Activated CD4-positive, alpha-beta T cell treated with anti-CD3 and anti-CD28 coated beads for 36 hours (primary cell): ENCODE measurements at regions of chrX and their contacts with region 1.

Region 1: DNA sequence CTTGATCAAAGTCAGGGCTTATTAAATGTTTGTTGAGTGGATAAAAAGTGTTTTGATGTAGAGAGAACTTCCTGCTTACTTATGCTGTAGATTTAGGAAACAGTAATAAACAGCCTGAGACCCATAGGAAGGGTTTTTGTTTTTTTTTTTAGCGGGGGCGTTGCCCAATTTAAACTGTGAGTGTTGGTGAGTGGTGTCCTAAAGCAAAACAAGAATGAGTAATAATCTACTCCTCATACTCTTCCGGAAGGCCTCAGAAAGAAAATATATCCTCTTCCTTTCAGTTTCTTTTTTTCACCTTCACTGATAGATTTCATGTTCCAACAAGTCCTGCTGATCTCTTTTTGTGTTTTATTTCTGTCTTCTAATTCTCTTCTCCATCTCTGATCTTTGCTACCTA is 104.4 kb upstream of the SCML1 start:
- DNase-seq: no peak
- ATAC-seq: peak; percentile 44
- H3K4me3 Mint-ChIP-seq: no peak overlapping the region
- H3K27ac Mint-ChIP-seq: peak overlapping the region; percentile 76
- H3K4me1 Mint-ChIP-seq: peaks cover 6% of the 10 kb centered on the region
- H3K27me3 Mint-ChIP-seq: no peaks in the 10 kb centered on the region

Region 2: DNA sequence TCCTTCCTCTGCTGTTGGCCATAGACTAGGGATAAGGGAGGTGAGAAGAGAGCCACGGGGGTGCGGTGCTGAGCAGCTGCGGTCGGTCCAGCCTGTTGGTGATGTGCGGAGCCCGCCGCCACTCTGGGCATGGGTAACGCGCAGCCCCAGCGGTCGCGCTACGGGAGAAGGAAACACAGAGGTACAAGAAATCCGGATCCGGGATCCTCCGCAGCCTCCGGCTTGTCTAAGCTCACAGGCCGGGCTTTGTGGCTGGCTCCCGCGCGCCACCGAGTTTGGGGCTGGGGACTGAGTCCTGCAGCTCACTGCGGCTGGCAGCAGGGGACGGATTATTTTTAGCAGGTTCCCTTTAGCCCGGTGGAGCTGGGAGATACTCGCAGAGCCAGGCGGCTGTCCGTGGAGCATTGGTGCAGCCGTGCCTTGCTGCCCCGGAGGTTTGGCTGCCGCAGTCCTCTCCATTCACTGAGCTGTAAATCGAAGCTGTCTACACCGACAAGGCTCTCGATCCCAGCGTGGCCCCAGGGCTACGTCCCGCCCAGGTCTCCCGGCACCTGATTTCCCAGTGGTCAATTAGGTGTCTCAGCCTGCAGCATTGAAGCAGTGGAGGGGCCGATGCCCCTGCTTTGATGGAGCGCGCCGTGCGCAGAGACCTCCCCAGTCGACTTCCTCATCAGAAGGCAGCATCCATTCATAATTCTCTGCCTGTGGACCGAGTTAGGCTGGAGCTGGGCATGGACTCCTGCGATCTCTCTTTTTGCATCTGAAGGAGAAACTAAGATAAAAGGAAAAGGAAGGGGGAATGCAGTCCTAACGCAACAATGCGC is 22.5 kb after region 1 on chrX:
- CTCF ChIA-PET with region 1: no interaction called
- POLR2A ChIA-PET with region 1: no interaction called
- intact Hi-C with region 1: loop called in 1 of 2 experiments (anchors 2 kb)
- DNase-seq: peak; percentile 37
- ATAC-seq: peak; percentile 27
- H3K4me3 Mint-ChIP-seq: peak overlapping the region; percentile 80
- H3K27ac Mint-ChIP-seq: peak overlapping the region; percentile 84
- H3K4me1 Mint-ChIP-seq: peaks cover 22% of the 10 kb centered on the region
- H3K27me3 Mint-ChIP-seq: peaks cover 2% of the 10 kb centered on the region